ENCODE measurements at regions of chr10 and their contacts with region 1.

Region 1: DNA sequence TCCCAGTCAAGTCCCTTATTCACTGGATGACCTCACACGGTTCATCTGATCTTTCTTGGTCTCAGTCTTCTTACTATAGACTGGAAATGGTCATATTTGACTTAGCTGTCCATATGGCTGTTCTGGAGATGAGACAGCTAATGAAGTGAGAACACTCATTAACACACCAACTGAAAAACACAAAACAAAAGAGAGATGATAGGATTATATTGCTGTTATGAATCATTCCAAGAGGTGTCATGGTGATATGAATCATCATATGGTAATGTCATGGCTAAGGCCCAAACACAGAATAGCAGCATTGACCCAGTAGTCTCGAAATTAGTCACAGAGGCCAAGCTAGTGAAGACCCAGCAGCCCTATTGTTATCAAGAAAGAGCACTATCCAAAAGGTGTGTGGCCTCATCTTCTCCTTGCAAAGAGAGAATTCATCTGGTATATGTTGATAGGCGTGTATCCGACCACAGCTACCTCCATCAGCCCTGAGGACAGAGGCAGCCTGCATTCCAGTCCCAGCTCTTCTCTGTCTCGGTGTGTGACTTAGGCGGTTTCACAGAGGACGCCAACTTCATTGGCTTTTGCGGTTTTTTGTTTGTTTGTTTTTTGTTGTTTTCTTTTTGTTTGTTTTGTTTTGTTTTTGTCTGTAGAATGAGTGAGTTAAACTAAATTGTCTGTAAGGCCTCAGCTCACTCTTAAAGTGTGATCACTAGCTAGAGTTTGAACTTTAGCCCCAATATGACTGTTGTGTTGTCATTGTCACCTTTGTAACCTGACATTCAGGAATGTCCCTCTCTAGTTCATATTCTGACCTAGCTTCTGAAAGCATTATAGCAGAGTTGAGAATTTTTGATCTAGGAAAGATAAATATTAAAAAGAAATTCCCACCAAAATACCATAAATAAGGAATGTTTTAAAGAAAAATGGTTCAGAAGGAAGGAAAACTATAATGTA is 97.4 kb upstream of the PDCD4 start:
- DNase-seq: peak; percentile 53
- ATAC-seq: peak; percentile 90
- H3K4me3 Mint-ChIP-seq: no peak overlapping the region
- H3K27ac Mint-ChIP-seq: peak overlapping the region; percentile 71
- H3K4me1 Mint-ChIP-seq: peaks cover 24% of the 10 kb centered on the region
- H3K27me3 Mint-ChIP-seq: no peaks in the 10 kb centered on the region

Region 2: DNA sequence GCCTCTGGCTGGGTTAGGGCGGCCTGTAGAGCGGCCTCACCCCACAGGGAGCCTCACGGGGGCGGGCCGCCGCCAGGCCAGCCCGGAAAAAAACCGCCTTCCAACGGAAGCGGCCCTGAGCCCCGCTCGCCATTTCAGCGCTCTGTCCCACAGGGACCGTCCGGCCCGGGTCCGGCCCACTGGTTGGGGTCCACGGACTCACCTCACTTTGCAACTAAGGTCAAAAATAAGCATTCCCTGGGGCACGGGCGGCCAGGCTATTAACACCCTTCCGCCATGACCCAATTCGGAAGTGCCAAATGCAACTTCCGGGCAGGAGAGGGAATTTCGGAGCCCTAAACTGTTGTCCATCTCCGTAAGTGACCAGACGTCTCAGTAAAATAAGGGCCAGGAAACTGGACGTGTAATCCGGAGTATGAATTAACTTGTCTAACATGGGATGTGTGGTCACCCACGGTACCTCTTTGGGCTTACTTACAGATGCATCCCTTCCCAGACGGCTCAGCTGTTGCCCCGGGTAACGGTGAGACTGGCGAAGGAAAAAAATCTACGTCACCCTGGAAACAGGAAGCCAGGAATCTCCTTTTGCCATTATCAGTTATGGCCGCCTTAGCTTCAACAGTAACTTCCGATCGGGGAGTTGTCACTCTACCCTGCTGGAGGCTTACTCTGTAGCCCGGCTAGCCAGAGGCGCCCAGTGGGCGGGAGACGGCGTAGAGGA is 144.5 kb after region 1 on chr10 and contains the start of gene BBIP1:
- CTCF ChIA-PET with region 1: interaction called, 3 read pairs
- POLR2A ChIA-PET with region 1: interaction called, 11 read pairs
- DNase-seq: no peak
- ATAC-seq: peak; percentile 95
- H3K4me3 Mint-ChIP-seq: peak within 1 kb of the TSS; percentile 89
- H3K27ac Mint-ChIP-seq: peak within 1 kb of the TSS; percentile 99
- H3K4me1 Mint-ChIP-seq: peaks cover 36% of the 10 kb centered on the region
- H3K27me3 Mint-ChIP-seq: no peaks in the 10 kb centered on the region
- total RNA-seq, gene BBIP1: 20.7 to 21.1 TPM